Activated CD4-positive, alpha-beta T cell treated with anti-CD3 and anti-CD28 coated beads for 36 hours (primary cell): ENCODE measurements at regions of chr5 and their contacts with region 1.

Region 1: GRCh38 chr5:176660860-176661641 is 13.8 kb downstream of the TSPAN17 start:
- DNase-seq: peak; percentile 89
- ATAC-seq: peak; percentile 78
- H3K4me3 Mint-ChIP-seq: no peak overlapping the region
- H3K27ac Mint-ChIP-seq: no peak overlapping the region
- H3K4me1 Mint-ChIP-seq: peaks cover 29% of the 10 kb centered on the region
- H3K27me3 Mint-ChIP-seq: peaks cover 8% of the 10 kb centered on the region

Region 2: GRCh38 chr5:176167800-176168199 is 493.3 kb before region 1 on chr5:
- CTCF ChIA-PET with region 1: no interaction called
- POLR2A ChIA-PET with region 1: no interaction called
- intact Hi-C with region 1: no loop called
- DNase-seq: no peak
- ATAC-seq: no peak
- H3K4me3 Mint-ChIP-seq: no peak overlapping the region
- H3K27ac Mint-ChIP-seq: no peak overlapping the region
- H3K4me1 Mint-ChIP-seq: no peaks in the 10 kb centered on the region
- H3K27me3 Mint-ChIP-seq: peaks cover 13% of the 10 kb centered on the region

Region 3: DNA sequence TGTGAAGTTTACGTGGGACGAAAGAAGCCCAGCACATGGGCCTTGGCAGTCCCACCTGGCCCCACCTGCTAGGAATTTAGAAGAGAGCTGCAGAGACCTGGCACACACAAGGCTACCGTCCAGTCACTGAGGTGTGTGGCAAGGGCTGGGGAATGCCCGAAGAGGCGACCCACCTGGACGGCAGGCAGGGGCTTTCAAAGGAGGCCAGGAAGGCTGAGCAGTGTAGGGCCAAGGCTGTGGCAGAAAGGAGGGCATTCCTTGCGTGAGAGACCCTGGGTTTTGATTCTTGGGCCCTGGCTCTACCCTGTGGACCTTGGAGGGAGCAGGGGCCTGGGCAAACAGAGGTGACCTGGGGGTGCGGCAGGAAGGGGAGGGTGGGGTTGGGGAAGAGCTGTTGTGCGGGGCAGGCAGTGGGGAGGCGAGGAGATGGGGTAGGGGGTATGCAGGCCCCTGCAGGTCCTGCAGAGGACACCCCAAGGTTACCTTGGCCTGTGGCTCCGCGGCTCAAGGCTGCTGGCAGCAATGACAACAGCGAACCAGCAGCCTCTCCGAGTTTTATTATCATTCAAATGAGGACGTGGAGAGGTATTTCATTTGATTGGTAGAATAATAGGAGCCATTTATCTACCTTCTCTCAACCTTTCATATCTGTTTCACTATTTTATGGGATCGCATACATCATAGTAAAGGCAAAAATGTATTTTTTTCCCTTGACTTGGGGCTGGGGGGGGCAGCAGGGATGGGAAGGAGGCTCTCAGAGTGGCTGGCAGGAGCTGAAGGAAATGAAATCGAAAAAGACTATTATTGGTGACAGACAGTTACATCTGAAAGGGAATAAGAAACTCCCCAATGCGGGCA is 11.1 kb after region 1 on chr5:
- CTCF ChIA-PET with region 1: interaction called, 17 read pairs
- POLR2A ChIA-PET with region 1: no interaction called
- intact Hi-C with region 1: no loop called
- DNase-seq: no peak
- ATAC-seq: no peak
- H3K4me3 Mint-ChIP-seq: no peak overlapping the region
- H3K27ac Mint-ChIP-seq: no peak overlapping the region
- H3K4me1 Mint-ChIP-seq: no peaks in the 10 kb centered on the region
- H3K27me3 Mint-ChIP-seq: peaks cover 8% of the 10 kb centered on the region

Region 4: DNA sequence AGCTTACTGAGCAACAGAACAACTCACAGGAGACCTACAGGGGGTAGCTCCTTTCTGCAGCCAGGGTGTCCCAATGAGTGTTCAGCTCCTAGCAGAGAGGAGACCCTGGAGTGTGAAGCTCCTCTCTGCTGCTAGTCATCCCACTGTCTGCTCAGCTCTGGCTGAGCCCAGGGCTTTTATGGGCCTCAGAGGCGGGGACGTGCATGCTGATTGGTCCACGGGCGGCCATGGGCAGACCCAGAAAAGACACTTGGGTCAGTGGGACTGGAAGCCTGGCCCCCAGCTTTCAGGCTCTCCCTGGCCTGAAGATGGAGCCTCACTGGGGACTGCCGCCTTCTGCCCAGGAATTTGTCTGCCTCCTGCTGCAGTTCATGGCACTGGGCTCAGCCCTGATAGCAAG is 26.8 kb after region 1 on chr5:
- CTCF ChIA-PET with region 1: interaction called, 15 read pairs
- POLR2A ChIA-PET with region 1: no interaction called
- intact Hi-C with region 1: no loop called
- DNase-seq: no peak
- ATAC-seq: no peak
- H3K4me3 Mint-ChIP-seq: no peak overlapping the region
- H3K27ac Mint-ChIP-seq: no peak overlapping the region
- H3K4me1 Mint-ChIP-seq: peaks cover 3% of the 10 kb centered on the region
- H3K27me3 Mint-ChIP-seq: peaks cover 28% of the 10 kb centered on the region

Region 5: DNA sequence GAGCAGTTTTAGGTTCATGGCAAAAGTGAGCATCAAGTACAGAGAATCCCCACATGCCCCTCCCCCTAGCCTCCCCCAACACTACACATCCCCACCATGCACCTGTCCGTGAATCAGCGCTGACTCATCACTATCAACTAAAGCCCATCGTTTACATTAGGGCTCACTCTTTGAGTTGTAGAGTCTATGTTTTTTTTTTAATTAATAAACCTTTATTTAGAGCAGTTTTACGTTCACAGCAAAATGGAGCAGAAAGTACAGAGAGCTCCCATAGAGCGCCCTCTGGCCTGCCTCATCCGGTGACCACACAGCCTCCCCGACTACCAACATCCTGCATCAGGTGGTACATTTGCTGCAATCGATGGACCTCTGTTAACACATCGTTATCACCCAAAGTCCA is 101.4 kb after region 1 on chr5:
- CTCF ChIA-PET with region 1: interaction called, 11 read pairs
- POLR2A ChIA-PET with region 1: no interaction called
- intact Hi-C with region 1: no loop called
- DNase-seq: no peak
- ATAC-seq: no peak
- H3K4me3 Mint-ChIP-seq: no peak overlapping the region
- H3K27ac Mint-ChIP-seq: no peak overlapping the region
- H3K4me1 Mint-ChIP-seq: peaks cover 3% of the 10 kb centered on the region
- H3K27me3 Mint-ChIP-seq: peaks cover 42% of the 10 kb centered on the region

Region 6: DNA sequence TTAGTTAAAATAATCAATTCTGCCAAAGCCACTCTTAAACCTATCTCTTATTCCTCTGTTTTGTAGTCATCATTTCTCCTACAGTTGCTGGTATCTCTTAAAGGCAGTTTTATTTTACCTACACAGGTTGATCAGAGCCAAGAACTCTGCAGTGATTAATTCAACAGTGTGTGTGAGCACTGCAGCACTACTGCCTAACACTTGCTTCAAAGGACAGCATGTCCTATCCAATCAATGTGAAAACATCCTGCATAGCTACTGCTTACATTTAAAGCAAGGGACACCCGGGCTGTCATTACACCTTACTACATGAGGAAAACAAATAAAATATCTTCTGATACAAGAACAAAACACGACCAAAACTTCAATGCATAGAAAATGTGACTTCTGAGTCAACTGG is 283.2 kb after region 1 on chr5:
- CTCF ChIA-PET with region 1: interaction called, 10 read pairs
- POLR2A ChIA-PET with region 1: no interaction called
- intact Hi-C with region 1: no loop called
- DNase-seq: no peak
- ATAC-seq: no peak
- H3K4me3 Mint-ChIP-seq: no peak overlapping the region
- H3K27ac Mint-ChIP-seq: no peak overlapping the region
- H3K4me1 Mint-ChIP-seq: peaks cover 4% of the 10 kb centered on the region
- H3K27me3 Mint-ChIP-seq: no peaks in the 10 kb centered on the region

Region 7: GRCh38 chr5:177071666-177072385 is 410.8 kb after region 1 on chr5:
- CTCF ChIA-PET with region 1: interaction called, 10 read pairs
- POLR2A ChIA-PET with region 1: no interaction called
- intact Hi-C with region 1: no loop called
- DNase-seq: peak; percentile 80
- ATAC-seq: peak; percentile 87
- H3K4me3 Mint-ChIP-seq: no peak overlapping the region
- H3K27ac Mint-ChIP-seq: no peak overlapping the region
- H3K4me1 Mint-ChIP-seq: peaks cover 4% of the 10 kb centered on the region
- H3K27me3 Mint-ChIP-seq: no peaks in the 10 kb centered on the region